ENCODE measurements at regions of chr3 and their contacts with region 1.

Region 1: GRCh38 chr3:189270248-189270832 is 98.6 kb downstream of the TPRG1 start:
- DNase-seq: peak; percentile 59
- H3K4me3 Mint-ChIP-seq: no peak overlapping the region
- H3K27ac Mint-ChIP-seq: no peak overlapping the region
- H3K4me1 Mint-ChIP-seq: peaks cover 13% of the 10 kb centered on the region
- H3K27me3 Mint-ChIP-seq: no peaks in the 10 kb centered on the region

Region 2: DNA sequence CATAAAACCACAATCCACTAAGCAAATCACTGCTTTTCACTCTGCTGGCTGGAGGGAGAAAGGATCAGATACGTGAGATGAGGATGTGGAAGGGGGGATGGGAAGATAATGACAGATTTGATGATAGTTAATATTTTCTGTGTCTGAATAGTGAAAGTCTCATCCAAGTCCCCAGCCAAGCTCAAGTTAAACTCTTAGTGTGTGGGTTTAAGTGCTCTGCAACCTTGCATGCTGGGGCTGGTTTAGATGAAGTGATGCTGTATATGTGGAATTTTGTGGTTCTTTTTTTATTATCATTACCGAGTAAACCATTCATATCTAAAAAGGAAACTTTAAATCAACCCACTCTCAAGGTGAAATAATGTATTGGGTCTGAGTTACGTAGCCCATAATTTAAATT is 12.4 kb after region 1 on chr3:
- CTCF ChIA-PET with region 1: interaction called, 10 read pairs
- intact Hi-C with region 1: no loop called
- DNase-seq: no peak
- H3K4me3 Mint-ChIP-seq: no peak overlapping the region
- H3K27ac Mint-ChIP-seq: no peak overlapping the region
- H3K4me1 Mint-ChIP-seq: peaks cover 31% of the 10 kb centered on the region
- H3K27me3 Mint-ChIP-seq: no peaks in the 10 kb centered on the region

Region 3: GRCh38 chr3:189355481-189356201 is 85.3 kb after region 1 on chr3:
- CTCF ChIA-PET with region 1: interaction called, 11 read pairs
- intact Hi-C with region 1: loop called (anchors 1 kb)
- DNase-seq: peak; percentile 54
- H3K4me3 Mint-ChIP-seq: peak overlapping the region; percentile 7
- H3K27ac Mint-ChIP-seq: peak overlapping the region; percentile 76
- H3K4me1 Mint-ChIP-seq: peaks cover 21% of the 10 kb centered on the region
- H3K27me3 Mint-ChIP-seq: no peaks in the 10 kb centered on the region

Region 4: DNA sequence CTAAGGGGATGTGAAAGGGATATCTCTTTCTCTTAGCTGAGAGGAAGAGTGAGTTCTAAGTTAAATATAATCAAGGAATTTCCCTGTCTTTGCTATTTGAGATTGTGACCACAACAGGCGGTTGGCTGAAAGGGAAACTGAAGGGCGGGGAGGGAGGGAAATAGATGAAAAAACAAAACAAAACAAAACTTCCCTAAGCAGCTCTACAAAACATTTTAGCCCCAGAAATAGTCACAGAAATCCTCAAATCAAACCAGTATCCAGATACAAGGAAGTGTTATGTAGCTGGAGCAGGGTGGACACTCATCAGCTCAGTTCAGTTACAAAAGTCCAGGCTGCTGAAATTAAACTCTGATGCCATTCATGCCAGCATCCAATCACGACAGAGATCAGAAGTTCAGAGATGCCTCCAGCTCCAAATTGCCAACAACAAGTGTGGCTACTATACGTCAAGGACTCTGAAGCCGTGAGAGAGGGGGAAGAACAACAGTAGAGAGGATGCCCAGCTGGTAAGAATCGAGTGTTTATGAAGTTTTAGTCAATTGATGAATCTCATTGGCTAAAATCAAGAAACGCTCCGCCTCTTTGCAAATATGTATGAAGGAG is 360.5 kb after region 1 on chr3:
- CTCF ChIA-PET with region 1: interaction called, 3 read pairs
- intact Hi-C with region 1: loop called (anchors 10 kb)
- DNase-seq: peak; percentile 28
- H3K4me3 Mint-ChIP-seq: no peak overlapping the region
- H3K27ac Mint-ChIP-seq: no peak overlapping the region
- H3K4me1 Mint-ChIP-seq: peaks cover 11% of the 10 kb centered on the region
- H3K27me3 Mint-ChIP-seq: peaks cover 2% of the 10 kb centered on the region

Region 5: DNA sequence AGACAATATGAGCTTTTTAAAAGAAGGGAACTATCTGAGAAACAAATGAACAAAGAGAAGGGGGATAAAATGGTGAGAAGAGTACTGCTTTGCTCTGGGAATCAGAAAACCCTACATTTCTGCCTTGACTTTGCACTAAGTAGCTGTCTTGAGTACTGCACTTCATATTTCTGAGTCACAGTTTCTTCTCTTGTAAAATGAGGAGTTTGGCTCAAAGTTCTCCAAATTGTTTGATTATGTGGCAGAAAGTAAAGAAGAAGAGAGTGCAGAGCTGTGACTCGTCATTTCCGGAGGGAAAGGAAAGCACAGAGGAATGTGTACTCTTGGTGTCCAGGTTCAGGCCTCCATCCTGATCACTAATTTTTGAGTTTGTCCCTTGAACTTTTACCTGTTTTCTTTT is 415.5 kb after region 1 on chr3:
- CTCF ChIA-PET with region 1: no interaction called
- intact Hi-C with region 1: loop called (anchors 10 kb)
- DNase-seq: no peak
- H3K4me3 Mint-ChIP-seq: no peak overlapping the region
- H3K27ac Mint-ChIP-seq: no peak overlapping the region
- H3K4me1 Mint-ChIP-seq: peaks cover 18% of the 10 kb centered on the region
- H3K27me3 Mint-ChIP-seq: no peaks in the 10 kb centered on the region